H1 (cell line): ENCODE measurements at regions of chr1 and their contacts with region 1.

Region 1: DNA sequence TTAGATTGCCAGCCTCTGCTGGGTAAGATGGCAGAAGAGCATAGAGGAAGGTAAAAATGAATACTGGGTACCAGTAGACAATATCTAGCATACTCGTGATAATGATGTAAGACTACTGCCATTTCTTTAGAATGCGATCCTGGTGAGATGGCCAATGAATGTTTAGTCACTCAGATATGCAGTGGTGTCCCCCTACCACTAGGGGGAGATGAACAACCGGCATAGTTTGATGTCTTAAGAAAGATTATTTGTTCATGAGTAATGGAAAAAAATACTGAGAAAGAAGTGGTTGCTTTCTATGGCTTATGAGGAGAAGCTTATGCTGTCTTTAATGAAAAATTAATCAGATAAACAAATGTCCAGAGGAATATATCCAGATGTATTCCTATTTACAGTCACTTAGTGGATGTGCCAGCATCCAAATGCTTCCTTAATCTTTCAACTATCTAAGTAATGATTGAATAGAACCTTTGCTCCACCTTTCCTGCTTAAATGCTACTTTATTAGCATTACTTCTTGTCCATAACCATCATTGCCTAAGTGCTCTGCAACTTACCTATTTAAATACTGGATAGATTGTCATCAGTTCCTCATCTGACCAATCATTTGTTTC is 256.6 kb downstream of the ST6GALNAC3 start:
- DNase-seq: peak in 1 of 2 experiments; percentile 38
- H3K4me3 ChIP-seq: no peak overlapping the region
- H3K27ac ChIP-seq: no peak overlapping the region
- H3K4me1 ChIP-seq: peaks cover 0 to 4% (median 1%) of the 10 kb centered on the region in 4 experiments; a peak in 2 of 7 replicates
- H3K27me3 ChIP-seq: no peaks in the 10 kb centered on the region
- CTCF ChIP-seq: peak; percentile 8 to 84 (median 56)
- EP300 ChIP-seq: no peak
- POLR2A ChIP-seq: no peak
- RAD21 ChIP-seq: peak; percentile 88 to 93

Region 2: DNA sequence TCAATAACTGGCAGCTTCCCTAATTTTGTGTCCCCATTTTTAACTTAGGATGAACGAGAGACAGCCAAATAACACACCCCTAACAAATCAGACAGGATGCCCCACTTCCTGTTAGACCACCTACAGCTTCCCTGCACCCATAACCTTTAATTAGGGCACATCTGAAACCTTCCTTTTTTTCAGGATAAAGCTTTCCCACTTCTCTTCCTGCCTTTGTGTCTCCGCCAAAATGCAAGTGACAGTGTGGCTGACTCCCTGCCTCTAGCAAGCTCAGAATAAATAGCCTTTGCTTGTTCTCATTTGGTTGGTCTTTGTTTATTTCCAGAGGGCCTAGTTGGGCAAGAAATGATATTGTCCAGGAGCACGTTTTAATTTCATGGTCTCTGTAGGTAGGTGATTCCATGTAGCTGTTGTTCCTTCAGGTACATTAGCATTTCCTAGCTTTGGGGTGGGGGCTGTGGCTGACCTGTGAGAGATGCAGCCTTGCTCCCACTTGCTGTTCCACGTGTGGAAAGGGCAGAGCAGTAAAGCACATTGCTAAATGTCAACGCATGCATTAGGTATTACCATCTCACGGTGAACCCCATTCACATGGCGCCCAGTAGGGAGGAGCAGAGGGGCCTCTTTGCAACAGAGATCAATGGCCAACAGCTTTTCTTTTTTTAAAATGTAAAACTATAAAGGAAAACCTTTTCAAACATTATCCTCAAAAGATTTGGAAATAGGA is 101.7 kb before region 1 on chr1:
- CTCF ChIA-PET with region 1: no interaction called
- POLR2A ChIA-PET with region 1: no interaction called
- DNase-seq: no peak
- H3K4me3 ChIP-seq: no peak overlapping the region
- H3K27ac ChIP-seq: peak overlapping the region; percentile 8; the same call in 1 of the 2 replicates
- H3K4me1 ChIP-seq: peaks cover 10 to 30% (median 17%) of the 10 kb centered on the region in 4 experiments; a peak in 6 of 7 replicates
- H3K27me3 ChIP-seq: no peaks in the 10 kb centered on the region
- CTCF ChIP-seq: no peak
- EP300 ChIP-seq: no peak
- POLR2A ChIP-seq: no peak
- RAD21 ChIP-seq: no peak

Region 3: GRCh38 chr1:76317299-76317900 is 13.7 kb before region 1 on chr1:
- CTCF ChIA-PET with region 1: interaction called, 37 read pairs
- POLR2A ChIA-PET with region 1: interaction called, 3 read pairs
- DNase-seq: no peak
- H3K4me3 ChIP-seq: no peak overlapping the region
- H3K27ac ChIP-seq: no peak overlapping the region
- H3K4me1 ChIP-seq: peaks cover 0 to 8% (median 0%) of the 10 kb centered on the region in 4 experiments; a peak in 2 of 7 replicates
- H3K27me3 ChIP-seq: no peaks in the 10 kb centered on the region
- CTCF ChIP-seq: no peak
- EP300 ChIP-seq: no peak
- POLR2A ChIP-seq: no peak
- RAD21 ChIP-seq: no peak

Region 4: DNA sequence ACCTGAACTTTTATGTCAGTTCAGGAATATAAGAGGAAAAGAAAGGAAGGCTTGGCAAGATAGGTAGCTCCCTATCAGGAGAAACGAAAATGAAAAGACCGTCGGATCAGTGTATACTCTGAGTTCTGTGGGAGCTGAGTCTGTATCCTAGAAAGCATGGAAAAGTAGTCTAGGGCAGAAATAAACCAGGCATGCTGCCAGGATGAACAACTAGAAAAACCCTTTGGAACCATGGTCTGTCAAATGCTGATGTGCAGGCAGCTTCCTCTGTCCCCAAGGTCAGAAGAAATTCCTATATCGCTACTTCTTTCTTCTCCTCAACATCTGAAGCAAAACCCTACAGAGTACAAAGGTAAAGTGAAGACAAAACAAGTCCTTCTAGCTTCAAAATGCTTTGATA is 12.3 kb after region 1 on chr1:
- CTCF ChIA-PET with region 1: interaction called, 21 read pairs
- POLR2A ChIA-PET with region 1: no interaction called
- DNase-seq: no peak
- H3K4me3 ChIP-seq: no peak overlapping the region
- H3K27ac ChIP-seq: no peak overlapping the region
- H3K4me1 ChIP-seq: no peaks in the 10 kb centered on the region
- H3K27me3 ChIP-seq: no peaks in the 10 kb centered on the region
- CTCF ChIP-seq: no peak
- EP300 ChIP-seq: no peak
- POLR2A ChIP-seq: no peak
- RAD21 ChIP-seq: no peak

Region 5: GRCh38 chr1:76366726-76367125 is 35.6 kb after region 1 on chr1:
- CTCF ChIA-PET with region 1: no interaction called
- POLR2A ChIA-PET with region 1: no interaction called
- DNase-seq: no peak
- H3K4me3 ChIP-seq: no peak overlapping the region
- H3K27ac ChIP-seq: no peak overlapping the region
- H3K4me1 ChIP-seq: no peaks in the 10 kb centered on the region
- H3K27me3 ChIP-seq: no peaks in the 10 kb centered on the region
- CTCF ChIP-seq: no peak
- EP300 ChIP-seq: no peak
- POLR2A ChIP-seq: no peak
- RAD21 ChIP-seq: no peak

Region 6: DNA sequence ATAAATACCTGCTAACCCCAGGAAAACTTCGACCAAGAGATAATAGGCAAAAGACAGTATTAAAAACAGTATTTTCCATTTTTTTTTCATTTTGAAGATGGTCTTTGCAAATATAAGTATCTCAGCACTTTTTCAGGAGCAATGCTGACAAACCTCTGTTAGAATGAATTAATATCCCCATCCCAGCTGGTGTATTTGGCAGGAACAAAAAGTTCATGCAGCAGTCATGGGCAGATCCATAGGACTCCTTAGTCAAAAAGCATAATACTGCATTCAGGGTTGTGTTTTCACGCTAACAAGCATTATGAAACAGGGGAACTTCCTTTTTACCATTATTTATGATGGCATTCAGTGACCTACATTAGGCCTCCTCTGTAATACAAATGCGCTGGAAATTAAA is 87.4 kb after region 1 on chr1:
- CTCF ChIA-PET with region 1: no interaction called
- POLR2A ChIA-PET with region 1: no interaction called
- DNase-seq: no peak
- H3K4me3 ChIP-seq: no peak overlapping the region
- H3K27ac ChIP-seq: no peak overlapping the region
- H3K4me1 ChIP-seq: no peaks in the 10 kb centered on the region
- H3K27me3 ChIP-seq: no peaks in the 10 kb centered on the region
- CTCF ChIP-seq: no peak
- EP300 ChIP-seq: no peak
- POLR2A ChIP-seq: no peak
- RAD21 ChIP-seq: no peak